PC-3 (cell line): ENCODE measurements at regions of chr13 and their contacts with region 1.

Region 1: DNA sequence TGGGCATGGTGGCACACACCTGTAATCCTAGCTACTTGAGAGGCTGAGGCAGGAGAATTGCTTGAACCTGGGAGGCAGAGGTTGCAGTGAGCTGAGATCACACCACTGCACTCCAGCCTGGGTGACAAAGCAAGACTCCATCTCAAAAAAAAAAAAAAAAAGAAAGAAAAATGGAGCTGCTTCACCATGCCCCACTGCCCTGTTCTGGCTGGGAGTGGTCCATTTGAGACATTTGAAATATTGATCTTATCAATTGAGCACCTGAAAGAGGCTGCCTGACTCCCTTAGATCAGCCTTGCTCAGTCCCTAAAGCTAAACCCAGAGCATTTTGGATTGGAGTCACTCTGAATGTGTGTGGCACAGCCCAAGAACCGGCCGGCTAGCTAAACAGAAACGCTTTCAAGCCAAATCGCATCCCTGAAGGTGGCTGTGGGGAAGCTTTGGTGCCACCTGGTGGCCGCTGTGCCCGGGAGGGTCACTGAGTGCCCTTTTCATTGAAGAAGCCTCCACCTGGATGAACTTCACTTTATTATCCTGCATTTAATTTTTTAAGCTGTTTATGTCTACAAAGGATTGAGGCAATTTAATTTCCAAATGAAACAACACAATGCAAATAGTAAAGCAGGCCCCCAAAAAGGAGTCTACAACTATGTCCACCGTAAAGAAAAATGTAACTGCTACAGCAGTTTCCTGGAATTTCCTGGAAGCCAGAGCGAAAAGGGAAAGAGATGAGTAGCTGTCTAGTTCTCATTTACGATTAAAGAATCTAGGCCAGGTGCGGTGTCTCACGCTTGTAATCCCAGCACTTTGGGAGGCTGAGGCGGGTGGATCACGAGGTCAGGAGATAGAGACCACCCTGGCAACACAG is 53.1 kb upstream of the SERPINE3 start:
- DNase-seq: peak; percentile 76
- ATAC-seq: peak; percentile 86
- H3K4me3 ChIP-seq: no peak overlapping the region
- H3K27ac ChIP-seq: no peak overlapping the region
- H3K4me1 ChIP-seq: peaks cover 7% of the 10 kb centered on the region
- H3K27me3 ChIP-seq: no peaks in the 10 kb centered on the region
- CTCF ChIP-seq: peak; percentile 86

Region 2: GRCh38 chr13:51125498-51126226 is 160.7 kb before region 1 on chr13:
- CTCF ChIA-PET with region 1: interaction called, 30 read pairs
- POLR2A ChIA-PET with region 1: no interaction called
- intact Hi-C with region 1: loop called (anchors 1 kb)
- DNase-seq: peak; percentile 61
- ATAC-seq: peak; percentile 96
- H3K4me3 ChIP-seq: no peak overlapping the region
- H3K27ac ChIP-seq: no peak overlapping the region
- H3K4me1 ChIP-seq: no peaks in the 10 kb centered on the region
- H3K27me3 ChIP-seq: no peaks in the 10 kb centered on the region
- CTCF ChIP-seq: peak; percentile 86

Region 3: DNA sequence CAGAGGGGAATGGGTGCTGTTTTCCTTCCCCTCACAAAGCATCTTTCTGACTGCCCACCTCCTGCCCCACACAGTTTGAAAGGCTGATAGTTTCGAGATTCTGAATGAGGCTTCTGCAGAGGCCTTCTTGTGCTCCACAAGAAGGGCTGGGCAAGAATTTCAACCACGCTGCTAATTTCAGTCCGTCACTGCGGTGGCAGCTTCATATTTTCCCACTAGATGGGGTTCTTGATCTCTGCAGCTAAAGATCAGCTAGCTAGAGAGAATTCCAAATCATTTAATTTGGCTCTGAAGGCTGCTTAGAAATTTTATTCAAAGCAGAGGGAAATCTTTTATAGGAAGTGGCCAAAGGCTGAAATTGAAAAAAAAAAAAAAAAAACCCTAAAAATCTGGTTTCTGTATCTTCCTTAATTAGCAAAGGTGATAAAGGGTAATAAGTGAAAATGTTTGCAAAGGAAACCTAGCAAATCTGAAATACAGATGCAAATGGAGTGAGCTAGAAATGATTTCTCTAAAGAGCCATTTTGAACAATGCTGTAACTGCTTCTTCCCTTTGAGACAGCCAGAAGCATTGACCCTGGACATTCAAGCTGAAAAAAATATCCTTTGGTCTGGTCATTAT is 137.3 kb before region 1 on chr13:
- CTCF ChIA-PET with region 1: interaction called, 69 read pairs
- POLR2A ChIA-PET with region 1: no interaction called
- intact Hi-C with region 1: loop called (anchors 1 kb)
- DNase-seq: peak; percentile 50
- ATAC-seq: peak; percentile 87
- H3K4me3 ChIP-seq: no peak overlapping the region
- H3K27ac ChIP-seq: no peak overlapping the region
- H3K4me1 ChIP-seq: no peaks in the 10 kb centered on the region
- H3K27me3 ChIP-seq: peaks cover 17% of the 10 kb centered on the region
- CTCF ChIP-seq: peak; percentile 72

Region 4: GRCh38 chr13:51191743-51192142 is 94.6 kb before region 1 on chr13:
- CTCF ChIA-PET with region 1: no interaction called
- POLR2A ChIA-PET with region 1: no interaction called
- intact Hi-C with region 1: no loop called
- DNase-seq: no peak
- ATAC-seq: no peak
- H3K4me3 ChIP-seq: no peak overlapping the region
- H3K27ac ChIP-seq: no peak overlapping the region
- H3K4me1 ChIP-seq: no peaks in the 10 kb centered on the region
- H3K27me3 ChIP-seq: peaks cover 14% of the 10 kb centered on the region; the same call in 1 of the 2 replicates
- CTCF ChIP-seq: no peak

Region 5: GRCh38 chr13:51222037-51222685 is 64.2 kb before region 1 on chr13 and contains the start of gene FAM124A:
- CTCF ChIA-PET with region 1: interaction called, 11 read pairs
- POLR2A ChIA-PET with region 1: no interaction called
- intact Hi-C with region 1: loop called (anchors 5 kb)
- DNase-seq: peak; percentile 45
- ATAC-seq: peak; percentile 90
- H3K4me3 ChIP-seq: peak within 1 kb of the TSS; percentile 81
- H3K27ac ChIP-seq: no peak within 1 kb of the TSS
- H3K4me1 ChIP-seq: no peaks in the 10 kb centered on the region
- H3K27me3 ChIP-seq: no peaks in the 10 kb centered on the region
- CTCF ChIP-seq: no peak
- total RNA-seq, gene FAM124A: 1.1 and 1.6 TPM in 2 replicates

Region 6: DNA sequence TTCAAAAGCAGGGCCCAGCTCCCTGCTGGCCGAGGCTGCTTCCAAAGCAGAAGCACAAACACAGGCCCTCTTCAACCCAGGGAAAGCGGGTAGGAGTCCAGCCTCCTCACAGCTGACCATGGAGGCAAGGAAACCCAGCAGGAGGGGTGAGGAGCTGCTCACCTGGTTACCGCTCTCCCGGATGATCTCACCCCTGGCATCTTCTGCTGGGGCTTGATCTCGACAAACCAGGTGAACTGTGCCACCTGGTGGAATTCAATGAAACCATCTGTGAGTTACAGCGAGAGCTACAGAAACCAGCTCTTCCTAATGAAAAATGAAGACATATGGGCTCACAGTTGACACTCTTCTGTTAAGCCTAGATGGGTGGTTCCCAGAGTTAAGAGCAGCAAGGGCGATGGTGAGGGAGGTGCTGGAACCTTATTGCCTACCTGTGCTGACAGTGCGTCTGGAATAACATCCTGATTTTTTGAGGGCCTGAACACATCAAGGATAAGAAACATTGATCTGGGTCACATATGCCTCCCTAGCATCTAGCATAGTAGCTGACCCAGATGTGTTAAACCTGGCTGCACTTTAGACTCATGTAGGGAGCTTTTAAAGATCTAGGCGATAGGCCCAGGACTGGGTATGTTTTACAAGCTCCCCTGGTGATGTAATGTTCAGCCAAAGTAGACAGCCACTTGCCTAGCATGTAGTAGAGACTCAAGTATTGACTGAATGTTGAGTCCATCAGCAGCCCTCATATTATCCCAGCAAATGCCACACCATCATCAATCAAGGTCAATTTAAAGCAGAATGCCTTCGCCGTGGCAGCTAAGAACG is 511.5 kb after region 1 on chr13:
- CTCF ChIA-PET with region 1: interaction called, 8 read pairs
- POLR2A ChIA-PET with region 1: no interaction called
- intact Hi-C with region 1: loop called (anchors 5 kb)
- DNase-seq: peak; percentile 83
- ATAC-seq: peak; percentile 69
- H3K4me3 ChIP-seq: no peak overlapping the region
- H3K27ac ChIP-seq: no peak overlapping the region
- H3K4me1 ChIP-seq: peaks cover 29% of the 10 kb centered on the region
- H3K27me3 ChIP-seq: no peaks in the 10 kb centered on the region
- CTCF ChIP-seq: peak; percentile 71